ENCODE measurements at regions of chr2 and their contacts with region 1.

Region 1: GRCh38 chr2:55239656-55240222 is 7.3 kb downstream of the RPS27A start:
- DNase-seq: no peak
- H3K4me3 ChIP-seq: no peak overlapping the region
- H3K4me3 Mint-ChIP-seq: no peak overlapping the region
- H3K27ac ChIP-seq: no peak overlapping the region
- H3K27ac Mint-ChIP-seq: no peak overlapping the region
- H3K4me1 ChIP-seq: peaks cover 0 to under 1% of the 10 kb centered on the region in 2 donors
- H3K4me1 Mint-ChIP-seq: no peaks in the 10 kb centered on the region
- H3K27me3 ChIP-seq: no peaks in the 10 kb centered on the region
- H3K27me3 Mint-ChIP-seq: no peaks in the 10 kb centered on the region
- CTCF ChIP-seq: no peak

Region 2: DNA sequence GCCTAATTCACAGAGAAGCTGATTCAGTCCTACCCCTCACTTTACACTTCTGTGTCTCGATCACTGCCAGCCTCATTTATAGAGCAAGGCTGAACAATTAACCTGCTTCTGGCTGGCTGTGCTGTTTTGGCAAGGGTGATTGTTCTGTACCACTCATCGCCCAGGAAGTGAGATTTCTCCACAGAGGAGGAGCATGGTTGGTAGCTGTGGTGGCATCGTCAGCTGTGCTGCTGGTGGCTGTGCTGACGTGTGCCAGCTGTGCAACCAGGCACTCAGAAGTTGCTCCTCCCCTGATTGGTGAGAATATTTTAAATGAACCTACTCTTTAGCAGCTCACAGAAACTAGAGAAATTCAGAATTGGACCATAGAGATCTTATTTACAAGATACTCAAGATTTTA is 358.0 kb before region 1 on chr2:
- intact Hi-C with region 1: no loop called
- DNase-seq: no peak
- H3K4me3 ChIP-seq: no peak overlapping the region
- H3K4me3 Mint-ChIP-seq: no peak overlapping the region
- H3K27ac ChIP-seq: no peak overlapping the region
- H3K27ac Mint-ChIP-seq: no peak overlapping the region
- H3K4me1 ChIP-seq: no peaks in the 10 kb centered on the region
- H3K4me1 Mint-ChIP-seq: no peaks in the 10 kb centered on the region
- H3K27me3 ChIP-seq: no peaks in the 10 kb centered on the region
- H3K27me3 Mint-ChIP-seq: no peaks in the 10 kb centered on the region
- CTCF ChIP-seq: no peak

Region 3: DNA sequence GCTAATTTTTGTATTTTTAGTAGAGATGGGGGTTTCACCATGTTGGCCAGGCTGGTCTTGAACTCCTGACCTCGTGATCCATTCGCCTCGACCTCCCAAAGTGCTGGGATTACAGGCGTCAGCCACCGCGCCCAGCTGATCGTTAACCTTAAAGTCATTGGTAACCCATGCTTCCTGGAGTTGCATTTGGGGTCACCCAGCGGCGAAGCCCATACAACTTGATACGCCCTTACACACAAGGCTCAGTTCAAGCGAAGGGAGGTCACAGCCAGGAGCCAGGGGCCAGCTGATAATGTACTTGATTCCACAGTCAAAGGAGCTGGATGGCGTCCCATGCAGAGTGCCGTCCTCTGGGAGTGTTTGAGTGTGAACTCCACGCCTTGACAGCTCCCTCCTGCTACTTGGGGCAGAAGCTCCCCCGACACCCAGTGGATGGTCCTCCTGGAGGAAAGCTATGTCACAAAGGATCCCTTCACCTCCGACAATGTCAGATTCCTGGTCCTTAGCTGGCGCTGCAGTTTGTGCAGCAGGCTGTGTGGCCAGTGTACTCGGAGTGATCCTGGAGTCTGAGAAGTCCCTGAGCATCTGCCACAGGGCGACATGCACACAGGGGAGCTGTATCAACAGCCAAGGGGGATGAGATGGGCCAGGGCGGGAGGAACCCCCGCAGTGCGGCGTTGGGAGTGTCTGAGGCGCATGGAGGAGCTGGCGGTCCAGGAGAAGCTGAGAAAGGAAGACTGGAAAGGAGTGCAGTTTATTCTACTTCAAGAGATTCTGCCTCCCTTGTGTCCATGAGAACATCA is 15.6 kb before region 1 on chr2:
- intact Hi-C with region 1: loop called in 1 of 2 experiments (anchors 1 kb)
- DNase-seq: no peak
- H3K4me3 ChIP-seq: peak overlapping the region in 2 of 3 experiments; percentile 54 to 82
- H3K4me3 Mint-ChIP-seq: peak overlapping the region; percentile 86 to 90
- H3K27ac ChIP-seq: peak overlapping the region in 1 of 2 donors; percentile 42
- H3K27ac Mint-ChIP-seq: peak overlapping the region in 6 of 7 donors; percentile 28 to 85 (median 70)
- H3K4me1 ChIP-seq: peaks cover 23 to 24% of the 10 kb centered on the region in 2 donors
- H3K4me1 Mint-ChIP-seq: peaks cover 23% of the 10 kb centered on the region
- H3K27me3 ChIP-seq: no peaks in the 10 kb centered on the region
- H3K27me3 Mint-ChIP-seq: no peaks in the 10 kb centered on the region
- CTCF ChIP-seq: no peak

Measured in CD14-positive monocyte (primary cell).